WTC11 (cell line): ENCODE measurements at regions of chr4 and their contacts with region 1.

Region 1: GRCh38 chr4:8607603-8608481 is 15.3 kb downstream of the CPZ start:
- DNase-seq: peak; percentile 89
- ATAC-seq: peak; percentile 88
- H3K4me3 Mint-ChIP-seq: no peak overlapping the region
- H3K27ac Mint-ChIP-seq: no peak overlapping the region
- H3K4me1 Mint-ChIP-seq: no peaks in the 10 kb centered on the region
- H3K27me3 Mint-ChIP-seq: peaks cover 3% of the 10 kb centered on the region; the same call in 1 of the 2 replicates
- CTCF ChIP-seq: peak; percentile 98

Region 2: GRCh38 chr4:8248091-8248490 is 359.8 kb before region 1 on chr4:
- CTCF ChIA-PET with region 1: no interaction called
- POLR2A ChIA-PET with region 1: no interaction called
- DNase-seq: no peak
- ATAC-seq: no peak
- H3K4me3 Mint-ChIP-seq: no peak overlapping the region
- H3K27ac Mint-ChIP-seq: no peak overlapping the region
- H3K4me1 Mint-ChIP-seq: no peaks in the 10 kb centered on the region
- H3K27me3 Mint-ChIP-seq: no peaks in the 10 kb centered on the region; the same call in 1 of the 2 replicates
- CTCF ChIP-seq: no peak

Region 3: GRCh38 chr4:8468746-8469535 is 138.9 kb before region 1 on chr4:
- CTCF ChIA-PET with region 1: interaction called, 15 read pairs
- POLR2A ChIA-PET with region 1: no interaction called
- DNase-seq: peak; percentile 89
- ATAC-seq: peak; percentile 94
- H3K4me3 Mint-ChIP-seq: no peak overlapping the region
- H3K27ac Mint-ChIP-seq: 0 out of 2 replicates have a peak overlapping the region, but pooled peaks have one; percentile 24
- H3K4me1 Mint-ChIP-seq: 0 out of 2 replicates have a peak, but pooled peaks cover 2% of the 10 kb centered on the region
- H3K27me3 Mint-ChIP-seq: no peaks in the 10 kb centered on the region
- CTCF ChIP-seq: peak; percentile 76

Region 4: DNA sequence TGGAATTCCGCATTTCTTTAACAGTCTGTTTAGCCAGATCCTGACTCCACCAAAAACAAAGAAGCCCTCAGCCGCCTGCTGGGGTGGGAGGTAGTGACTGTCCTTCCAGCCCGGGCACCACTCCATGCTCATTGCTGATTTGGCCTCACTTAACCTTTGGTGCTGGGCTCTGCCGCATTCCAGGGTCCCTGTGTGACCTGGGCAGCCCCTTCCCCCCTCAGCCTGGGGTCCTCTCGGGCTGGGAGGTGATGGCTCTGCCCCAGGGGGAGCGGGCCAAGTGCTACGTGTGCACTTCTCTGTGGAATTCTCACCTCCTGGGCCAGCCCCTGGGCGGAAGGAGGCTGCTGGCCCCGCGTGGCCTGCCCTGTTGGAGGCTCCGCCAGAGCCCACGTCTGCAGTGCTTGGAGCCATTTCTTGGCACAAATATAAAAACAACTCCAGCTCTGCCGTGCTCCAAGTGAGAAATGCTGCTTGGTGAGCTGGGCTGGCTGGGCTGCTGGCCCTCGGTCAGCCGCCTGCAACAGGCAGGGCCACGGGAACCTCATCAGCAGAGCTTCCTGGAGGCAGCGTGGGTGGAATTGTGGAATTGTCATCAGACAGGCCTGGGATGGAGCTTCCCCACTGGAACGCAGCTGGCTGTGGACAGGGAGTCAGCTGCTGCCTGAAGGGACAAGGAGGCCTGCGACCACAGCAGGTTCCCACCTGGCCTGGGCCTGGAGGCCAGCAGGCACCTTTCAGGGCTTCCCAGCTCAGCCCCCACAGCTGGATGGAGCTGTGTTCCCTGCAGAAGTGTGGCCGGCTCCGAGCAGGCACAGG is 101.3 kb before region 1 on chr4:
- CTCF ChIA-PET with region 1: interaction called, 10 read pairs
- POLR2A ChIA-PET with region 1: no interaction called
- DNase-seq: peak; percentile 49
- ATAC-seq: peak; percentile 85
- H3K4me3 Mint-ChIP-seq: no peak overlapping the region
- H3K27ac Mint-ChIP-seq: no peak overlapping the region
- H3K4me1 Mint-ChIP-seq: peaks cover 26% of the 10 kb centered on the region
- H3K27me3 Mint-ChIP-seq: peaks cover 2% of the 10 kb centered on the region; the same call in 1 of the 2 replicates
- CTCF ChIP-seq: no peak

Region 5: DNA sequence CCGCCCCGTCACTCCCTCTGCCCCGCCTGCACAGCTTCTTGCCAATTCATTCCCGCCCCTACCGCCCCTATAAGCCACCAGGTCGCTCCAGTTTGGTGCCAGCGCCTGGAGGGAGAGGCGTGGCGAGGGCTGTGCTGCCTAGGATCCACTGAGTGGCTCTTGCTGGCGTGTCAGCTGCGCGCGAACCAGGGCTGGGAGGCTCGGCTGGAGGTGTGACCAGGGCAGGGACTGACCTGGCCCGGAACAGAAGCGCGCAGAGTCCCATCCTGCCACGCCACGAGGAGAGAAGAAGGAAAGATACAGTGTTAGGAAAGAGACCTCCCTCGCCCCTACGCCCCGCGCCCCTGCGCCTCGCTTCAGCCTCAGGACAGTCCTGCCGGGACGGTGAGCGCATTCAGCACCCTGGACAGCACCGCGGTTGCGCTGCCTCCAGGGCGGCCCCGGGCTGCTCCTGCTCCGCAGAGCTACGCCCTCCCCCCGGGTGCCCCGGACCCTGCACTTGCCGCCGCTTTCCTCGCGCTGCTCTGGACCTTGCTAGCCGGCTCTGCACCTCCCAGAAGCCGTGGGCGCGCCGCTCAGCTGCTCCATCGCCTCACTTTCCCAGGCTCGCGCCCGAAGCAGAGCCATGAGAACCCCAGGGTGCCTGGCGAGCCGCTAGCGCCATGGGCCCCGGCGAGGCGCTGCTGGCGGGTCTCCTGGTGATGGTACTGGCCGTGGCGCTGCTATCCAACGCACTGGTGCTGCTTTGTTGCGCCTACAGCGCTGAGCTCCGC is 27.3 kb before region 1 on chr4 and contains the start of gene GPR78:
- CTCF ChIA-PET with region 1: interaction called, 16 read pairs
- POLR2A ChIA-PET with region 1: no interaction called
- DNase-seq: peak; percentile 97
- ATAC-seq: peak; percentile 92
- H3K4me3 Mint-ChIP-seq: peak within 1 kb of the TSS; percentile 62
- H3K27ac Mint-ChIP-seq: peak within 1 kb of the TSS; percentile 68; the same call in 1 of the 2 replicates
- H3K4me1 Mint-ChIP-seq: peaks cover 36% of the 10 kb centered on the region
- H3K27me3 Mint-ChIP-seq: peaks cover 52% of the 10 kb centered on the region
- CTCF ChIP-seq: no peak
- total RNA-seq, gene GPR78: 2.3 to 5.7 TPM (median 2.7 TPM) in 3 replicates

Region 6: DNA sequence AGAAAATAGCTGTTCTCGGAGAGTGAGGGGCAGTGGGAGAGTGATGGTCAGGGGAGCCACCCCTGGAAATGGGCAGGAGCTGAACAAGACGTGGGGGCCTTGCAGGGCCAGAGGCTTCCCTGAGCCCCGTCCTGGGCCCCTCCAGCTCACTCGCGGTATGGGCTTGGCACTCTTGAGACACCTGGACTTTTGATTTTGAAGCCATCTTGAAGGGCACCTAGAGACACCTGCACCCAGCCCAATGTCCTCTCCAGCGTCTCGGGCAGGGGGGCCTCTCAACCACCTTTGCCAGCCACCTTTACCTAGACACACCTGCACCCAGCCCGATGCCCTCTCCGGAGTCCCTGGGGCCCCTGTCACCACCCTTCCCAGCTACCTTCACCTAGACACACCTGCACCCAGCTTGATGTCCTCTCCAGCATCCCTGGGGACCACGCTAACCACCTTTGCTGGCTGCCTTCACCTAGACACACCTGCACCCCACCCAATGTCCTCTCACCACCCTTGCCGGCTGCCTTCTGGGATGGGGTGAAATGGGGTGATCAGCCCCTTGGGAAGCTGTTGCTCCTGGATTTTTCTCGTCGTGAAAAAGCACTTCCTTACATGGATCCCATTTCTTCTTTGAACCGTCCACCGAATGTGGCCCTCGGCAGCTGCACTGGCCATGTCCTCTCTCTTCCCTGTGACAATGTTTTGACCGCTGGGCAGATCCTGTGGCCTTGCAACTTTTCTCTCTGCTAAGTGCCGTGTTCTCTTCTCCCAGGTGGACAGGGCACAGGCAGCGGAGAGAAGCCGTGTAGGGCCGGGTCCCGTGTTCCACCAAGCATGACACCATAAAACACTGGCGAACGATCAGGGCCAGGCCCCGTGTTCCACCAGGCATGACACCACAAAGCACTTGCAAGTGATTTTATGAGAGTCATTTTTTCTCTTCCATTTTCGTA is 32.2 kb after region 1 on chr4:
- CTCF ChIA-PET with region 1: interaction called, 14 read pairs
- POLR2A ChIA-PET with region 1: no interaction called
- DNase-seq: peak; percentile 4
- ATAC-seq: no peak
- H3K4me3 Mint-ChIP-seq: no peak overlapping the region
- H3K27ac Mint-ChIP-seq: no peak overlapping the region
- H3K4me1 Mint-ChIP-seq: no peaks in the 10 kb centered on the region
- H3K27me3 Mint-ChIP-seq: peaks cover 6% of the 10 kb centered on the region; the same call in 1 of the 2 replicates
- CTCF ChIP-seq: no peak

Region 7: DNA sequence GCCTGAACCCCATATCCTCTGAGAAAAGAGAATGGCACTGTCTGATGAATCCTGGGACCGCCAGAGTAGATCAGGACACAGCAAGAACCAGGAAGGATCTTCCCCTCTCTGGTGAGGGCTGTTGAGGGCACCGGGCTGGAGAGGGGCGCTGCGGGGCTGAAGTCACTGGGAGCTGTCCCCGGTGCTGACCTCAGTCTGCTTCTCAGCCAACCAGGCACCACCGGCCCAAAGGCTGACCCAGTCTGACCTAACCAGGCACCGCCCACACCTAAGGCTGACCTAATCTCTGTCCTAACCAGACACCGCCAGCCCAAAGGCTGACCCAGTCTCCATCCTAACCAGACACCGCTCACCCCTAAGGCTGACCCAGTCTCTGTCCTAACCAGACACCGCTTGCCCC is 67.5 kb after region 1 on chr4:
- CTCF ChIA-PET with region 1: interaction called, 11 read pairs
- POLR2A ChIA-PET with region 1: no interaction called
- DNase-seq: peak; percentile 89
- ATAC-seq: peak; percentile 99
- H3K4me3 Mint-ChIP-seq: no peak overlapping the region
- H3K27ac Mint-ChIP-seq: no peak overlapping the region
- H3K4me1 Mint-ChIP-seq: no peaks in the 10 kb centered on the region
- H3K27me3 Mint-ChIP-seq: peaks cover 14% of the 10 kb centered on the region
- CTCF ChIP-seq: no peak

Region 8: GRCh38 chr4:8917868-8918783 is 310.3 kb after region 1 on chr4:
- CTCF ChIA-PET with region 1: interaction called, 27 read pairs
- POLR2A ChIA-PET with region 1: no interaction called
- DNase-seq: peak; percentile 91
- ATAC-seq: peak; percentile 92
- H3K4me3 Mint-ChIP-seq: no peak overlapping the region
- H3K27ac Mint-ChIP-seq: no peak overlapping the region
- H3K4me1 Mint-ChIP-seq: no peaks in the 10 kb centered on the region
- H3K27me3 Mint-ChIP-seq: peaks cover 13% of the 10 kb centered on the region
- CTCF ChIP-seq: peak; percentile 90